Astrocyte of the cerebellum (primary cell): ENCODE measurements at regions of chr3 and their contacts with region 1.

Region 1: DNA sequence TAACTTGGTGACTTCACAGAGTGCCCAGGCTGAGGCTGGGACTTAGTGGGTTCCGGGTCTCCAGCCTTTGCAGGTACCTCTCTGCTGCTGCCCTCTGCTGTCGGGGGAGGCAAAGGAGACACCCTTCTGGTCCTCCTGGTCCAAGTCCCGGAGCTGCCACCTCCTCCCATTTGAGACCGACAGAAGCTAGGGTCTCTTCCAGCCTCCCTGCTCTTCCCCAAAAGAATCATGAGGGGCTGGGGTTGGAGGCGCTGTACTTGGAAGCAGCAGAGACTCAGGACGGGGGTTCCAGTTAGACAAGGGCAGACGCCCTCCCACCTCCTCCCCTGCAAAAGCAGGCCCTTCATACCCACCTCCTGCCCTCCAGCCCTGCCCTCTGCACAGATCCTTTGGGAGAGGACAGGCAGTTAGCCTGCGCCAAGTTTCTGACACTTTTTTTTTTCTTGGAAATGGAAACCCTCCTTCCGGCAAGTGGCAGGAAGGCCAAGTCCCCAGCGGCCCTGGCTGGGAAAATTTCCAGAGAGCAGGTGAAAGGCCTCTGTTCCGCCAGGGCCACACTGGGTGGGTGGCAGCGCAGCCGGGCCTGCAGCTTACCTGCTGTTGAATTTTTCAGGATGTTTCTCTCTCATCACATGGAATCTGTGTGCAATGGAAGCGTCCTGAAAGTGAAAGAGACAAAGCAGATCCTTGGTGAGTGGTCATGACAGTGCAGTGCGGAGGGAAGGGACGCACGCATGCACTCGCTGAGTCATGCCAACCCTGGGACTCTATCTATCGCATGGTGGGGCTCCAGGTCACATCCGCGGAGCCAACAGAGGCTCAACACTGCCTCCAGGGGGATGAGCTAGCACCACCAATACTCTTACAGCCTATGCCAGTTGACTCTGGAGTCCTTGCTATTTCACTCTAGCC is 119.9 kb downstream of the DGKG start:
- DNase-seq: peak; percentile 15
- H3K4me3 ChIP-seq: no peak overlapping the region
- CTCF ChIP-seq: peak; percentile 64

Region 2: GRCh38 chr3:185992831-185993374 is 249.3 kb before region 1 on chr3:
- in situ Hi-C with region 1: loop called (anchors 10 kb)
- DNase-seq: no peak
- H3K4me3 ChIP-seq: no peak overlapping the region
- CTCF ChIP-seq: no peak